ENCODE measurements at regions of chr21 and their contacts with region 1.

Region 1: GRCh38 chr21:38766987-38767722 is 38.6 kb upstream of the ETS2 start:
- DNase-seq: peak; percentile 21 to 85 (median 77)
- ATAC-seq: peak; percentile 93
- H3K4me3 ChIP-seq: peak overlapping the region; percentile 74
- H3K4me3 Mint-ChIP-seq: peak overlapping the region; percentile 76 to 98 (median 90)
- H3K27ac ChIP-seq: peak overlapping the region; percentile 67
- H3K27ac Mint-ChIP-seq: peak overlapping the region; percentile 93 to 99 (median 95)
- H3K4me1 ChIP-seq: peaks cover 24% of the 10 kb centered on the region in 2 donors
- H3K4me1 Mint-ChIP-seq: peaks cover 15 to 45% (median 35%) of the 10 kb centered on the region in 7 donors
- H3K27me3 ChIP-seq: no peaks in the 10 kb centered on the region
- H3K27me3 Mint-ChIP-seq: no peaks in the 10 kb centered on the region

Region 2: GRCh38 chr21:38780879-38781278 is 13.7 kb after region 1 on chr21:
- CTCF ChIA-PET with region 1: no interaction called
- POLR2A ChIA-PET with region 1: interaction called, 5 read pairs
- intact Hi-C with region 1: loop called in 1 of 2 experiments (anchors 1 kb)
- DNase-seq: no peak
- ATAC-seq: peak; percentile 22
- H3K4me3 ChIP-seq: no peak overlapping the region
- H3K4me3 Mint-ChIP-seq: peak overlapping the region in 1 of 10 donors; percentile 16
- H3K27ac ChIP-seq: no peak overlapping the region
- H3K27ac Mint-ChIP-seq: peak overlapping the region in 1 of 9 donors; percentile 86
- H3K4me1 ChIP-seq: peaks cover 0 to 4% of the 10 kb centered on the region in 2 donors
- H3K4me1 Mint-ChIP-seq: peaks cover 0 to 28% (median 7%) of the 10 kb centered on the region in 7 donors
- H3K27me3 ChIP-seq: no peaks in the 10 kb centered on the region
- H3K27me3 Mint-ChIP-seq: peaks cover 0 to 11% (median 4%) of the 10 kb centered on the region in 5 donors

Region 3: GRCh38 chr21:38985568-38986378 is 218.6 kb after region 1 on chr21:
- CTCF ChIA-PET with region 1: no interaction called
- POLR2A ChIA-PET with region 1: no interaction called
- intact Hi-C with region 1: loop called in 1 of 2 experiments (anchors 1 kb)
- DNase-seq: peak in 2 of 9 donors; percentile 13 to 72
- ATAC-seq: peak; percentile 53
- H3K4me3 ChIP-seq: no peak overlapping the region
- H3K4me3 Mint-ChIP-seq: peak overlapping the region in 4 of 10 donors; percentile 2 to 73 (median 23)
- H3K27ac ChIP-seq: no peak overlapping the region
- H3K27ac Mint-ChIP-seq: peak overlapping the region in 1 of 9 donors; percentile 95
- H3K4me1 ChIP-seq: no peaks in the 10 kb centered on the region
- H3K4me1 Mint-ChIP-seq: peaks cover 2 to 46% (median 12%) of the 10 kb centered on the region in 7 donors
- H3K27me3 ChIP-seq: peaks cover 0 to 10% of the 10 kb centered on the region in 2 donors
- H3K27me3 Mint-ChIP-seq: peaks cover 4 to 87% (median 66%) of the 10 kb centered on the region in 5 donors

Region 4: GRCh38 chr21:39349211-39350093 is 582.3 kb after region 1 on chr21:
- CTCF ChIA-PET with region 1: interaction called, 4 read pairs
- POLR2A ChIA-PET with region 1: no interaction called
- intact Hi-C with region 1: loop called in 1 of 2 experiments (anchors 1 kb)
- DNase-seq: peak; percentile 91 to 98 (median 97)
- ATAC-seq: peak; percentile 91
- H3K4me3 ChIP-seq: peak overlapping the region; percentile 79
- H3K4me3 Mint-ChIP-seq: peak overlapping the region; percentile 88 to 99 (median 96)
- H3K27ac ChIP-seq: peak overlapping the region; percentile 87
- H3K27ac Mint-ChIP-seq: peak overlapping the region; percentile 94 to 100 (median 99)
- H3K4me1 ChIP-seq: peaks cover 20 to 25% of the 10 kb centered on the region in 2 donors
- H3K4me1 Mint-ChIP-seq: peaks cover 30 to 49% (median 37%) of the 10 kb centered on the region in 7 donors
- H3K27me3 ChIP-seq: no peaks in the 10 kb centered on the region
- H3K27me3 Mint-ChIP-seq: peaks cover 0 to 16% (median 0%) of the 10 kb centered on the region in 5 donors

Region 5: GRCh38 chr21:39445321-39446269 is 678.4 kb after region 1 on chr21 and contains the start of gene LCA5L:
- CTCF ChIA-PET with region 1: no interaction called
- POLR2A ChIA-PET with region 1: no interaction called
- intact Hi-C with region 1: loop called in 1 of 2 experiments (anchors 1 kb)
- DNase-seq: peak; percentile 80 to 96 (median 90)
- ATAC-seq: peak; percentile 93
- H3K4me3 ChIP-seq: peak within 1 kb of the TSS; percentile 83
- H3K4me3 Mint-ChIP-seq: peak within 1 kb of the TSS; percentile 91 to 99 (median 94)
- H3K27ac ChIP-seq: peak within 1 kb of the TSS; percentile 76
- H3K27ac Mint-ChIP-seq: peak within 1 kb of the TSS; percentile 86 to 98 (median 94)
- H3K4me1 ChIP-seq: peaks cover 11 to 13% of the 10 kb centered on the region in 2 donors
- H3K4me1 Mint-ChIP-seq: peaks cover 8 to 26% (median 14%) of the 10 kb centered on the region in 7 donors
- H3K27me3 ChIP-seq: peaks cover 0 to 2% of the 10 kb centered on the region in 2 donors
- H3K27me3 Mint-ChIP-seq: peaks cover 0 to 44% (median 14%) of the 10 kb centered on the region in 5 donors
- total RNA-seq, gene LCA5L: not detected